ENCODE measurements at regions of chr10 and their contacts with region 1.

Region 1: DNA sequence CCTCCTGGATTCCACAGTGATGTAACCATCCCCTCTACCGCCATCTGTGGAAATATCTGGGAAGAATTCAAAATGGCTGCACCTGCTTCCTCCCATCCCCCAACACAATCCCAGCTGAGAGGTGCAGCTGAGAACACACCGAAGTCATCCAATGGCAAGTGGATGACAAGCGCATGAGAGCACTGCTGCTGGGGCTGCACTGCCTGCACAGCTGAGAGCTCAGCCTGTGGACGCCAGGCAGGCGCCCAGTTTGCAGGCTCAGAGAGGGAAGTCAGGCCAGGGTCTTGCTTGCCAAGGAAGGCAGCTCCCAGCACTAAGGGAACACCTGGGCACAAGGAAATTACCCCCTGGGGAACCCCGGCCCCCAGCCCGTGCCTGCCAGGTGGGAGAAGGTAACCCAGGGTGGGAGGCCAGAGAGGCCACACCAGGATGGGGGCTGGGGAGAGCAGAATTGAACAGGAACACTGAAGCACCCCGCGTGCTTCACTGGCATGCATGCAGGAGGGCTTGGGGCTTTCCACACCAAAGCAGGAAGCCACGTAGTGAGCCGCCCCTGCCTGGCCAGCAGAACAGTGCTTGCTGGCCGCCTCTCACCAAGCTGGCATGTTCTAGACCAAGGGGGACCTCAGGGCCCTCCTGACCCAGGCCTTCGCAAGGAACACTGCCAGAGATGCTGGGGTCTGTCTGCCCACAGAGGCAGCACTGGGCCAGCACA is 46.2 kb downstream of the FAM53B start:
- DNase-seq: no peak
- ATAC-seq: peak; percentile 34
- H3K4me3 Mint-ChIP-seq: peak overlapping the region; percentile 80
- H3K27ac Mint-ChIP-seq: peak overlapping the region; percentile 98
- H3K4me1 Mint-ChIP-seq: peaks cover 62% of the 10 kb centered on the region
- H3K27me3 Mint-ChIP-seq: no peaks in the 10 kb centered on the region

Region 2: GRCh38 chr10:124601431-124602120 is 96.4 kb before region 1 on chr10:
- POLR2A ChIA-PET with region 1: no interaction called
- DNase-seq: no peak
- ATAC-seq: no peak
- H3K4me3 Mint-ChIP-seq: no peak overlapping the region
- H3K27ac Mint-ChIP-seq: no peak overlapping the region
- H3K4me1 Mint-ChIP-seq: no peaks in the 10 kb centered on the region
- H3K27me3 Mint-ChIP-seq: no peaks in the 10 kb centered on the region

Region 3: DNA sequence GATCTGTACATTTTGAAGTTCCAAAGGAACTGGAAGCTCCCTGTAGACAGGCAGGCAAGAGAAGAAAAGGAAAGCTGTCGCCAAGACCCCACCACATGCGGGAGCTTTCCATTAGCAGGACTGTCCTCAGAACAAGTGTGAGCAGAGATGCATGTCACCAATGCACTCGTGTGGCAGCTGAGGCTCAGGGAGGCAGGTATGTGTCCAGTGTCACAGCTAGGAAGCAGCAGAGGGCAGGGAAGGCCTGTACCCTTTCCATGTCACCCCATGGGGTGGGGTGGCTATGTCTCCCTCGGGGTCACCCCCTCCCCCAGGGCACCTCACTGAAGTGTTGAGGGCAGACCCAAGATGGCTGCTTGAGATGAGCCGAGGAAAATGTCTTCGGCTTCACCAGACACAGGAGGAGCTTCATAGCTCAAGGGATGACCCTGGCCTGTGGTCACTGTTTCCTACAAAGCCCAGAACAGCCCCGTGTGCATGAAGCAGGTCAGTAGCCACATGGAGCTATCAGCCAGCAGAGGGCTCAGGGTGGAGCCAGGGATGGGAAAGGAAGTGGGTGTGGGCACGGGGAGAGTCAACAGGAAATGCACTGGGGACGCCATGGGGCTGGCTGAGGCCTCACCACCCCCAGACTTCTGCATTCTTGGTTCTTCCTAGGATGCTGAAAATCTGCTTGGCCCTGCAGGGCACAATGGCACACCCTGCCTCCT is 50.4 kb before region 1 on chr10:
- POLR2A ChIA-PET with region 1: interaction called, 19 read pairs
- DNase-seq: peak; percentile 68
- ATAC-seq: peak; percentile 79
- H3K4me3 Mint-ChIP-seq: peak overlapping the region; percentile 63
- H3K27ac Mint-ChIP-seq: peak overlapping the region; percentile 85
- H3K4me1 Mint-ChIP-seq: peaks cover 49% of the 10 kb centered on the region
- H3K27me3 Mint-ChIP-seq: peaks cover 3% of the 10 kb centered on the region

Region 4: DNA sequence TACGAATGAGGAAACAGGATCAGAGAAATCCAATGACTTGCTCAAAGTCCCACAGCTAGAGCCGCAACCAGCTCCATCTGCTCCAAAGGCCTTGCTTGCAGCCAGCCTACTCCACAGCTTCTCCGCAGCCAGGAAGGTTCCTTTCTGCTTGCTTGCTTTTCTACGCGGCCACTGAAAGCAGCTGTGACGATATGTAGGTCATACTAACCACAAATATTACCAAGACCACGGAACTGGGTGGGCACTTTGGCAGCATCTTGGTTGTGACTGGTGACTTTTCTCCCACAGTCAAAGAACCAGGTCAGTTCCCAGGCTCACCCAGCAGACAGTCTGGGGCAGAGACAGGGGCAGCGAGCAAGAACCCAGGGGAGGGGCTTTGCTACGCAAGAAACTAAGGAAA is 40.2 kb before region 1 on chr10:
- POLR2A ChIA-PET with region 1: no interaction called
- DNase-seq: no peak
- ATAC-seq: no peak
- H3K4me3 Mint-ChIP-seq: no peak overlapping the region
- H3K27ac Mint-ChIP-seq: no peak overlapping the region
- H3K4me1 Mint-ChIP-seq: peaks cover 12% of the 10 kb centered on the region
- H3K27me3 Mint-ChIP-seq: no peaks in the 10 kb centered on the region